PC-3 (cell line): ENCODE measurements at regions of chr10 and their contacts with region 1.

Region 1: GRCh38 chr10:128069351-128070051 is 56.7 kb downstream of the MKI67 start:
- DNase-seq: peak; percentile 64
- ATAC-seq: peak; percentile 85
- H3K4me3 ChIP-seq: no peak overlapping the region
- H3K27ac ChIP-seq: no peak overlapping the region
- H3K4me1 ChIP-seq: no peaks in the 10 kb centered on the region
- H3K27me3 ChIP-seq: no peaks in the 10 kb centered on the region
- CTCF ChIP-seq: peak; percentile 70

Region 2: DNA sequence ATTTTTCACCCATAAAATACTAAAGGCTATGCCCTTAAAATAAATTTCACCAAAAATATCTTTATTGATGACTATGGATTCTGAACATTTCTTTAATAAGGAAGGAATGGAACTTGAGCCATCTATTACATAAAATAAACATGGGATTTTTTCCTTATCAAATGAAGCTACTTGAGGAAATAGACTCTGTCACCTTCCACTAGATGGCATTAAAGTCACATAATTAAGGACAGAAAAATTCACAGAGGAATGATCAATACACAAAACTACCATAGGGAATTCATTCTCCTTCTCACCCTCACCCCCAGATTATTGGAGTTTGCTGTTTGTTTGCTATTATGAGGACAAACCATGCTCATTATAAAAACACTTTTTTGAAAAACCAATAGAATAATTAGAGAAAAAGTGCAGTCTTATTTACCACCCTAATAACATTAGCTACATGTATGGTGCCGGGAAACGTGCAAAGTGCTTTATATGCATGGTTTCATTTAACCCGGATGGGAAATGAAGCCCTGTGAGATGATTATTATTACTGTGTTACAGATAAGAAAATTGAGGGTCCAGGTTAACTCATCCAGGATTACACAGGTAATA is 353.6 kb before region 1 on chr10:
- CTCF ChIA-PET with region 1: no interaction called
- POLR2A ChIA-PET with region 1: no interaction called
- intact Hi-C with region 1: loop called (anchors 5 kb)
- DNase-seq: peak; percentile 34
- ATAC-seq: no peak
- H3K4me3 ChIP-seq: no peak overlapping the region
- H3K27ac ChIP-seq: no peak overlapping the region
- H3K4me1 ChIP-seq: no peaks in the 10 kb centered on the region
- H3K27me3 ChIP-seq: 0 out of 2 replicates have a peak, but pooled peaks cover 11% of the 10 kb centered on the region
- CTCF ChIP-seq: peak; percentile 53

Region 3: GRCh38 chr10:127832501-127832900 is 237.0 kb before region 1 on chr10:
- CTCF ChIA-PET with region 1: no interaction called
- POLR2A ChIA-PET with region 1: no interaction called
- intact Hi-C with region 1: no loop called
- DNase-seq: no peak
- ATAC-seq: no peak
- H3K4me3 ChIP-seq: no peak overlapping the region
- H3K27ac ChIP-seq: no peak overlapping the region
- H3K4me1 ChIP-seq: no peaks in the 10 kb centered on the region
- H3K27me3 ChIP-seq: peaks cover 30% of the 10 kb centered on the region
- CTCF ChIP-seq: no peak

Region 4: GRCh38 chr10:127906548-127907377 is 162.7 kb before region 1 on chr10 and contains the start of gene PTPRE:
- CTCF ChIA-PET with region 1: interaction called, 5 read pairs
- POLR2A ChIA-PET with region 1: no interaction called
- intact Hi-C with region 1: loop called (anchors 2 kb)
- DNase-seq: peak; percentile 72
- ATAC-seq: peak; percentile 93
- H3K4me3 ChIP-seq: peak within 1 kb of the TSS; percentile 66
- H3K27ac ChIP-seq: peak within 1 kb of the TSS; percentile 64
- H3K4me1 ChIP-seq: peaks cover 25% of the 10 kb centered on the region
- H3K27me3 ChIP-seq: no peaks in the 10 kb centered on the region
- CTCF ChIP-seq: peak; percentile 46
- total RNA-seq, gene PTPRE: 3.1 and 5.0 TPM in 2 replicates

Region 5: DNA sequence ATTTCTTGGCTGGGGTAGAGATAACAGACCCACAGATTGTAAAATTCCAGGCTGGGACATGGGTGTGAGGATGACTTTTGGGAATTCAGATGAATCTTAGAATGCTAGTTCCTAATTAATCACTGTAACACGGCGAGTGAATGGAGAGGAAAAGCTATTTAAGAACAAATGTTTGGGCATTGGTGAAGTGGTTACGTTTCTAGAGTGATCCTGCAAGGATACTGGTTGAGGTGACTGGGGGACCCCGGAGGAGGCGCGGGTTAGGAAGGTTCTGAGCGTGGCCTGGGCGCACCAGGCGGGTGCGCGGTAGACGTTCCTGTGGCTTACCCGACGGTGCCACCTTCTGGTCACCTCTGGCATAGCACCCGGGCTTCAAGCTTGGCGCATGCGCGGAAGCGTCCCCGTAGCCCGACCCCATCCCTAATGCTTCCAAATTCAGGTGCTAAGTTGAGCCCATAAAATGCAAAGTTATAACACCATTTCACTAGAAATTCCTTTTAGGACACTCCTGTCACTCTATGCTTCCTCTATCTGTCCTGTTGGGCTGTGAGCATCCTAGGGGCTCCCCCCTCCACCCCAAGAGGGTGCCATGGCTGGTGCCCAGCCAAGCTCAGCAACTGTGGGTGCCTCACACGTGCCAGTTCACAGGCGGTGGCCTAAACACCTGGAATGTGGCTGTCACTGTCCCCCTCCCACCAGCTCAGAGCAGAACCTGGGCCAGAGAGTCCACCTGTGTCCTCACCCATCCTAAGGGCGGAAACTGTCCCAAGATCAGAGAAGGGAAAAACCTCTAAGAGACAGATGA is 58.1 kb before region 1 on chr10:
- CTCF ChIA-PET with region 1: interaction called, 3 read pairs
- POLR2A ChIA-PET with region 1: no interaction called
- intact Hi-C with region 1: loop called (anchors 1 kb)
- DNase-seq: peak; percentile 74
- ATAC-seq: peak; percentile 87
- H3K4me3 ChIP-seq: no peak overlapping the region
- H3K27ac ChIP-seq: no peak overlapping the region
- H3K4me1 ChIP-seq: peaks cover 11% of the 10 kb centered on the region
- H3K27me3 ChIP-seq: no peaks in the 10 kb centered on the region
- CTCF ChIP-seq: peak; percentile 85

Region 6: GRCh38 chr10:128035557-128035973 is 33.9 kb before region 1 on chr10:
- CTCF ChIA-PET with region 1: interaction called, 15 read pairs
- POLR2A ChIA-PET with region 1: no interaction called
- intact Hi-C with region 1: loop called (anchors 1 kb)
- DNase-seq: peak; percentile 49
- ATAC-seq: peak; percentile 60
- H3K4me3 ChIP-seq: no peak overlapping the region
- H3K27ac ChIP-seq: no peak overlapping the region
- H3K4me1 ChIP-seq: peaks cover 3% of the 10 kb centered on the region; the same call in 1 of the 2 replicates
- H3K27me3 ChIP-seq: no peaks in the 10 kb centered on the region
- CTCF ChIP-seq: peak; percentile 74

Region 7: GRCh38 chr10:128137877-128138276 is 68.4 kb after region 1 on chr10:
- CTCF ChIA-PET with region 1: no interaction called
- POLR2A ChIA-PET with region 1: no interaction called
- intact Hi-C with region 1: no loop called
- DNase-seq: no peak
- ATAC-seq: no peak
- H3K4me3 ChIP-seq: no peak overlapping the region
- H3K27ac ChIP-seq: no peak overlapping the region
- H3K4me1 ChIP-seq: no peaks in the 10 kb centered on the region
- H3K27me3 ChIP-seq: no peaks in the 10 kb centered on the region
- CTCF ChIP-seq: no peak